Mammary epithelial cell (primary cell): ENCODE measurements at regions of chr14 and their contacts with region 1.

Region 1: DNA sequence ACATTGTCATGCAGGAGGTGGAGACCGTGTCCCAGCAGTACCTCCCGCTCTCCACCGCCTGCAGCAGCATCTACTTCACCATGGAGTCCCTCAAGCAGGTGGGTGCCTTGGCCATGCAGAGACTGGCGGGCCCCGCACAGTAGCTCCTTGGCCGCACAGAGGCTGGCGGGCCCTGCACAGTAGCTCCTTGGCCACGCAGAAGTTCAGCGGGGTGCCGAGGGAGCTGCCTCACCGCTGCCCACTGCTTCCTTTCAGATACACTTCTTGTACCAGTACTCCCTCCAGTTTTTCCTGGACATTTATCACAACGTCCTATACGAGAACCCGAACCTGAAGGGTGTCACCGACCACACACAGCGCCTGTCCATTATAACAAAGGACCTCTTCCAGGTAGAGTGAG is 47.7 kb downstream of the HSP90AA1 start:
- DNase-seq: no peak
- H3K4me3 ChIP-seq: no peak overlapping the region
- H3K27ac ChIP-seq: no peak overlapping the region
- H3K4me1 ChIP-seq: no peaks in the 10 kb centered on the region
- H3K27me3 ChIP-seq: no peaks in the 10 kb centered on the region
- CTCF ChIP-seq: no peak

Region 2: DNA sequence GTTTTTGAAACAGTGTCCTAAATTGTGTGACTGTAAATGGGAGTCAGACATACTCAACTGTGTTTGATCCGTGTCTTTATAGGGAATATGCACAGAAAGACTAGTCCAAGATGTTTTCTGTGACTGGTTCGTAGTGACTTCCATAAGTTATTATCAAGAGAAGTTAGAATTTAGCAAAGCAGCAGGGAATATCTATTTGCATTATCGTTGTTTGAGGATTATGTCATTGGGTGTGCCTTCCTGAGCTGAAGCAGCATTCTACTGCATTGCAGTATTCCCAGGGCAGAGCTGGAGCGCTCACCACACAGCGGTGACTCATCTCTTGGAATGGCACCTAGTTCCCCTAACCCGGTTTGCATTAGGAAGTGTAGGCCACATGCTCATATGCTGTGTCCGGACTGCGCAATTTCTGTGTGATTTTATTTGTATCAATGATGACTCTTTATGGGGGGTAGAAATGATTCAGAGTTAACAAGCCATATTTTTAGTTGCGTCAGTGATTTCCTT is 66.8 kb before region 1 on chr14:
- CTCF ChIA-PET with region 1: no interaction called
- dilution Hi-C with region 1: no loop called
- in situ Hi-C with region 1: no loop called
- intact Hi-C with region 1: no loop called
- DNase-seq: peak; percentile 99
- H3K4me3 ChIP-seq: peak overlapping the region in 1 of 3 experiments; percentile 25
- H3K27ac ChIP-seq: peak overlapping the region; percentile 88
- H3K4me1 ChIP-seq: peaks cover 39% of the 10 kb centered on the region
- H3K27me3 ChIP-seq: no peaks in the 10 kb centered on the region
- CTCF ChIP-seq: no peak

Region 3: DNA sequence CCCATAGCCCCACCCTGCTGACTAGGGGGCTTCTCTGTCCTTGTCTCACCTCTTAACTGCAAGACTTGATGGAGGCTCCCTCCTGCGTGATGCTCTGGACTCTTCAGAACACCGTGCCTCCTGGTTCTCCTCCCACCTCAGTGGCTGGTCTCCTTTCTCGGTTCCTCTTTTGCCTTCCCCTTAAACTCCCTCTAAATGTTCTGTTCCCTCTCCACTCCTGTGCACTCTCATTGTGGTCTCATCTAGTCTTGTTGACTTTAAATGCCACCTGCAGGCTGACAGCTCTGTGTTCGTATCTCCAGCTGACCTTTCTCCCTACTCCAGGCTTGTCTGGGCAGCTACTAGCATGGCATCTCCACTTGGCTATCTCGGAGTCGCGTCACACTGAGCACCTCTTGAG is 46.4 kb before region 1 on chr14:
- CTCF ChIA-PET with region 1: no interaction called
- dilution Hi-C with region 1: loop called (anchors 10 kb)
- in situ Hi-C with region 1: no loop called
- intact Hi-C with region 1: loop called (anchors 5 kb)
- DNase-seq: no peak
- H3K4me3 ChIP-seq: no peak overlapping the region
- H3K27ac ChIP-seq: no peak overlapping the region
- H3K4me1 ChIP-seq: no peaks in the 10 kb centered on the region
- H3K27me3 ChIP-seq: no peaks in the 10 kb centered on the region
- CTCF ChIP-seq: no peak

Region 4: DNA sequence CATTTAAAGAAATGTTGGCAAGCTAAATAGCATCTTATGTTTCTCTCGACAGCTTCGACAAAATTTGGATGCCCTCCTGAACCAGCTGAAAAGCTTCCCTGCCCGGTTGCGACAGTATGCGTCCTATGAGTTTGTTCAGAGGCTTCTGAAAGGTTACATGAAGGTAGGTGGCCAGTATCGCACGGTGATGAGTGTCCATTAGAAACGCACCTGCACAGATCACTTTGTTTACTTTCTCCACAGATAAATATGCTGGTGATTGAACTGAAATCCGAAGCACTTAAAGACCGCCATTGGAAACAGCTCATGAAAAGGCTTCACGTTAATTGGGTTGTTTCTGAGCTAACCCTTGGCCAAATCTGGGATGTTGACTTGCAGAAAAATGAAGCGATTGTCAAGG is 38.3 kb before region 1 on chr14:
- CTCF ChIA-PET with region 1: no interaction called
- dilution Hi-C with region 1: loop called (anchors 5 kb)
- in situ Hi-C with region 1: no loop called
- intact Hi-C with region 1: no loop called
- DNase-seq: no peak
- H3K4me3 ChIP-seq: no peak overlapping the region
- H3K27ac ChIP-seq: no peak overlapping the region
- H3K4me1 ChIP-seq: no peaks in the 10 kb centered on the region
- H3K27me3 ChIP-seq: no peaks in the 10 kb centered on the region
- CTCF ChIP-seq: no peak

Region 5: DNA sequence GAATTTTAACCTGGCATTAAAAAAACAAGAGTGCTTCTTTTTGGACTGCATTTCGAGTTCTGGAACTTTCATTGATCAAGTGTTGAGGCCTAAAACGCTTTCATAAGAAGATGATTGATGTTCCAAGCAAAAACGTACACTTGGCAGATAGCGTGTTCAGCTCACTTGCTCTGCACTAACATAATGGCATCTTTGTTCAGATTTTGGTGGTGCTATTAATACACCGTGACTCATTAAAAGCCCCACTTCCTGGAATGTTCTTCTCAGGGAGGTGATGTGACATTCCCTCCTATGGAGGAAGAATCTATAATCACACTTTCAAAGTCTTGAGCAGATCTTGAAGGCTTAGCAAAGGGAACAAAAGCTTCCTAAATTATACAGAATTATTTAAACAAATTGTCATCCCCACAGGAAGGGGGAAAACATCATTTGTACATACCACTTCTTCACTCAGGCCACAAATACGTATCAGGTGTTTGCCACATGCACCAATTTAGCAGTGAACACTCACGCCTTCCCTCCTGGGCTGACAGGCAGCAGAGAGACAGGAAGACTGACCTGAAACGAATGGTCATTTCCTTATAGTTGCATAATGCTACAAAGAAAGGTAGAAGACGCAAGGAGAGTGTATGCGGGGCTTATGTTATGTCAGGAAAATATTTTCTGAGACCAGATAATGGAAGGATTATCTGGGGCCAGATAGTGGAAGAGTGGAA is 32.3 kb after region 1 on chr14:
- CTCF ChIA-PET with region 1: no interaction called
- dilution Hi-C with region 1: loop called (anchors 5 kb)
- in situ Hi-C with region 1: no loop called
- intact Hi-C with region 1: no loop called
- DNase-seq: peak; percentile 83
- H3K4me3 ChIP-seq: no peak overlapping the region
- H3K27ac ChIP-seq: peak overlapping the region; percentile 73
- H3K4me1 ChIP-seq: peaks cover 16% of the 10 kb centered on the region
- H3K27me3 ChIP-seq: no peaks in the 10 kb centered on the region
- CTCF ChIP-seq: no peak